ENCODE measurements at regions of chr1 and their contacts with region 1.

Region 1: DNA sequence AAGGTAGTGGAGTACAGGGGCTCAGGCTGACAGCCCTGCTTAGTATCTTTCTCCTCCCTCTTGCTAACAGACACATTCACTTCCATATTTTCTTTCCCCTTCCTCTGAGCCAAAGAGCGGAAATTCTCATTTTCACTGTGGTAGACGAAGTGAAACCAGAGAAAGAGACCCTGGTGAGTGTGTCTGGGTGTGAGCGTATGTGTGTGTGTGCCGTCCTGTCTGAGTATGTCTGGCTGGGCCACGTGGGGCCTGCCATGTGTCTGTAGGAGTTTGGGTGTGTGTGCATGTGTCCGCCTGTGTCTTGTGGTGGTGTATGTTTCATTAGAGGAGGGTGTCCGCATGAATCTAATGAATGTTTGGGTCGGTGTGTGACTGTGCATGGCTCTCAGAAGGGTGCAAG is 1.7 kb downstream of the COL8A2 start:
- DNase-seq: no peak
- H3K4me3 ChIP-seq: no peak overlapping the region
- H3K27ac ChIP-seq: no peak overlapping the region
- H3K4me1 ChIP-seq: peaks cover 0 to 13% (median 6%) of the 10 kb centered on the region in 4 experiments; a peak in 6 of 7 replicates
- H3K27me3 ChIP-seq: peaks cover 16 to 38% (median 30%) of the 10 kb centered on the region in 4 experiments
- CTCF ChIP-seq: no peak
- EP300 ChIP-seq: no peak
- POLR2A ChIP-seq: no peak
- RAD21 ChIP-seq: no peak

Region 2: DNA sequence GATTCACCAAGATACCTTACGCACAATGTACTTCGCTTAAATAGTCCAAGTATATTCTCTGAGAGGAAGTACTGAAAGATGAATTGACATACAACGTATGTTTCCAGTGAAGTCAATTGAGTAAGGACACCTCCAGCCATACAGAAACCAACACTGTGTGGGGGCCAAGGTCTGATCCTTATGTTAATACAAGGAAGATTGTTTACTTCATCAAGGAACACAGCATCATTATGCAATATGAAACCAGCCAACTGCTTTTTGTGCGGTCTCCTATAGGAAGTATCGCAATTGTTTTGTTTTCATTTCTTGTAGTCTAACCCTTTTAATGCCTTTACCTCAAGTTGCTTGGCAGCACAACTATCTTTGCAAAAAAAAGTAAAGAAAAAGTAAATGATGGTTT is 67.7 kb before region 1 on chr1:
- CTCF ChIA-PET with region 1: no interaction called
- POLR2A ChIA-PET with region 1: no interaction called
- DNase-seq: no peak
- H3K4me3 ChIP-seq: no peak overlapping the region
- H3K27ac ChIP-seq: no peak overlapping the region
- H3K4me1 ChIP-seq: no peaks in the 10 kb centered on the region
- H3K27me3 ChIP-seq: no peaks in the 10 kb centered on the region
- CTCF ChIP-seq: no peak
- EP300 ChIP-seq: no peak
- POLR2A ChIP-seq: no peak
- RAD21 ChIP-seq: no peak

Region 3: DNA sequence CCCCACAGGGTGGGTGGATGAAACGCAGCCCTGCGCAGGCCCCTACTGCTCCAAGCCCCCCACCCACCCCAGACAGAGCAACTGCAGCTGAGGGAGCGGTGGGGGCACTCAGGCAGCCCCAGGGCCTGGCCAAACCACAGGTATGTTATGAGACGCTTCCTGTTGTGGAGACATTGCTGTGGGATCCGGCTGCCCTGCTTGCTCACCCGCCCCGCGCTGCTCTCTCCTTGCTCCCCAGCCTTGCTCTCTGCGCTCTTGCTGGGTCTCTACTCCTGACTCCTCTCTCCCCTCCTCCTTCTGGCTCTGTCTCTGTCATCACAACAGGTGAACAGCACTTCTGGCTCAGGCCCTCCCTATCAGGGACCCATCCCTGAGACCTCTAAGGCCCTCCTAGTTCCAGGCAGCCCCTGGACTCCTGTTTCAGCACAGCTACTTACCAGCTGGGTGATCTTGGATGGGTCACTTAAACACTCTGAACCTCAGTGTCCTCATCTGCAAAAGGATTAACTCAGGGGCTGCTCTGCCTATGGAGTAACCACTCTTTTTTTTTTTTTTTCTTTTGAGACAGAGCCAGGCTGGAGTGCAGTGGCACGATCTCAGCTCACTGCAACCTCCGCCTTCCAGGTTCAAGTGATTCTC is 14.2 kb before region 1 on chr1:
- CTCF ChIA-PET with region 1: interaction called, 738 read pairs
- POLR2A ChIA-PET with region 1: interaction called, 6 read pairs
- DNase-seq: no peak
- H3K4me3 ChIP-seq: no peak overlapping the region
- H3K27ac ChIP-seq: no peak overlapping the region
- H3K4me1 ChIP-seq: no peaks in the 10 kb centered on the region
- H3K27me3 ChIP-seq: no peaks in the 10 kb centered on the region
- CTCF ChIP-seq: no peak
- EP300 ChIP-seq: no peak
- POLR2A ChIP-seq: no peak
- RAD21 ChIP-seq: no peak